Natural killer cell (primary cell): ENCODE measurements at regions of chr11 and their contacts with region 1.

Region 1: DNA sequence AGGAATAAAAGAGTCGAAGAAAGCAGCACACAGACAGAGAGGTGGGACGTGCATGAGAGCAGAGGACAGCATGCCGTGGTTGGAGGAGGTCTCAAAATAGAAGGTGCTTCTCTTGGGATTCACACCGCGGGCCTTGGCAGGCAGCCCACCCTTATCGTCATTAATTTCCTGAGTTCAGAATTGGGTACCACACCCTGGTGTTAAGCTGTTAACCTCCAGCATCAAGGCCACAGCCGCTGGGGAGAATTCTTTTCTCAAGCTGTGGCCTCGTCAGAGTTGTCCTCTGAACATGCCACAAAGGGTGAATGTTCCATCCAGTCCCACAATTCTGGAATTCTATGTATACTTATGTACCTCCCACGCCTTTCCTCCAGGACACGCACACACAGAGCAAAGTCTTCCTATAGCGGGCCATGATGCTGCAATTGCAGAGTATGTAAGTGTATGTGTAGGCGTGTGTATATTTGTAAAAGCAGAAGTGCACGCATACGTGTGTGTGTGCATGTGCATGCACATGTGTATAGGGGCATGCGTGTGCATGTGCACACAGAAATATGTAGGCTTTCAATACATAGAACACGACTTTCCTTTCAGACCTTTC is 39.0 kb downstream of the ADAMTS8 start:
- DNase-seq: peak; percentile 58 to 79
- ATAC-seq: peak; percentile 75 to 84 (median 79)
- H3K4me3 ChIP-seq: peak overlapping the region; percentile 13
- H3K4me3 Mint-ChIP-seq: peak overlapping the region; percentile 82
- H3K27ac ChIP-seq: peak overlapping the region; percentile 78
- H3K27ac Mint-ChIP-seq: peak overlapping the region; percentile 83 to 90
- H3K4me1 ChIP-seq: peaks cover 36% of the 10 kb centered on the region
- H3K4me1 Mint-ChIP-seq: peaks cover 43 to 49% of the 10 kb centered on the region in 2 donors
- H3K27me3 ChIP-seq: no peaks in the 10 kb centered on the region
- H3K27me3 Mint-ChIP-seq: peaks cover 0 to 9% of the 10 kb centered on the region in 2 donors
- CTCF ChIP-seq: no peak

Region 2: DNA sequence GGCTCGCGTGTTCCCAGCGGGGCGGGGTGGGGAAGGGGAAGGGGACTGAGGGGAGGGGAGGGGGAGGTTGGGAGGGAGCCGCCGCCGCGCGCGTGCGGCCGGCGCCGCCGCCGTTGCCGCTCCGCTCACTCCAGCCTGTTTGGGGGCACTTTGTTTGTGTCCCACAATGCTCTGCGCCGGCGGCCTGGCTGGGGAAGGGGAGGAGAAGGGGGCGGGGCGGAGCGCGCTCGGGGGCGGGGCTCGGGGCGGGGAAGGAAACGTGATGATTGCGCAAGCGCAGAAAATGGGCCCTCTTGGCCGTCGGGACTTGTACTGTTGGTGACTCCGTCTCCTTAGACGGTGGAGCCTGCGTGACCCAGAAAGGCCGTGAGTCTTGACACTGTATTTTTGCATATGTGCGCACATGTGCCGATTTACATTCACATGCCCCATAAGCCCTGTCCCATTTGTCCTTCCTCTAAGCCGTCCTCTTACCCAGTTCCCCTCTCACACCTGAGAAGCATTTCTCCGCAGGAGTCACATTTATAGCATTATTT is 74.6 kb before region 1 on chr11 and contains the start of gene ZBTB44:
- intact Hi-C with region 1: loop called (anchors 2 kb)
- DNase-seq: peak; percentile 81 to 95
- ATAC-seq: peak; percentile 85 to 96 (median 87)
- H3K4me3 ChIP-seq: peak within 1 kb of the TSS; percentile 83
- H3K4me3 Mint-ChIP-seq: peak within 1 kb of the TSS; percentile 95
- H3K27ac ChIP-seq: peak within 1 kb of the TSS; percentile 87
- H3K27ac Mint-ChIP-seq: peak within 1 kb of the TSS; percentile 95 to 96
- H3K4me1 ChIP-seq: peaks cover 16% of the 10 kb centered on the region
- H3K4me1 Mint-ChIP-seq: peaks cover 35 to 37% of the 10 kb centered on the region in 2 donors
- H3K27me3 ChIP-seq: no peaks in the 10 kb centered on the region
- H3K27me3 Mint-ChIP-seq: no peaks in the 10 kb centered on the region
- CTCF ChIP-seq: no peak
- total RNA-seq, gene ZBTB44: 103 to 131 (median 105) TPM

Region 3: DNA sequence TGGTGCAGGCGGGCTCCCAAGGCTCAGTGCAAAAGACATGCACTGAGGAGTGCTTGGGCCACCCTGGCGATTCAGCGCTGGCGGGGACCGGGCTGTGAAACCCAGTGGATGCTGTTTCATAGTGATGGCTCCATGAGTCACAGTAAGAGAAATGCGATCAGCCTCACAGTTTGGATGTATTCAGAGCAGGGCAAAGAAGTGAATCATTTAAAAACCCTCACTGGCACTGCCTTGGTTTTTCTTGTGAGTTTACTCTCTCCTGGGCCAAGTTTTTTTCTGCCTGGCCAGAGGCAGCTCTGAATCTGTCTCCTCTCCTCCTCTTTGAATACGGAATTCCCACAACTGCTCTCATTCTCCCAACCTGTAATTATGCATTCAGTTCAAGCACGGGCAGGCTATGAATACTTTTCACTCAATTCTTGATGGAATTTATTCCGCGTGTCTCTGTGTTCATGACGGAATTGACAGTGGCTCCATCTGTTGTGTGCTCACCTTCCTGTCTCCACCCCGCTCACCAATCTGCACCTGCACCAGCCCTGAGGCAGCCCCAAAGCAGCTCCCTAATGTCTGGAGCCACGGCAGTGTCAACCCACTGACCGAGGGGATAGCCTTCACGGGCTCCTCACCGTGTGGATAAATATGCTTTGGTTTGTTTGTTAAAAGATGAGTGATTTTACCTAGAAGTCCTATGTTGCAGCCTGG is 24.1 kb after region 1 on chr11:
- intact Hi-C with region 1: no loop called
- DNase-seq: no peak
- ATAC-seq: no peak
- H3K4me3 ChIP-seq: no peak overlapping the region
- H3K4me3 Mint-ChIP-seq: no peak overlapping the region
- H3K27ac ChIP-seq: no peak overlapping the region
- H3K27ac Mint-ChIP-seq: no peak overlapping the region
- H3K4me1 ChIP-seq: no peaks in the 10 kb centered on the region
- H3K4me1 Mint-ChIP-seq: peaks cover 0 to 4% of the 10 kb centered on the region in 2 donors
- H3K27me3 ChIP-seq: no peaks in the 10 kb centered on the region
- H3K27me3 Mint-ChIP-seq: peaks cover 21 to 24% of the 10 kb centered on the region in 2 donors
- CTCF ChIP-seq: no peak

Region 4: DNA sequence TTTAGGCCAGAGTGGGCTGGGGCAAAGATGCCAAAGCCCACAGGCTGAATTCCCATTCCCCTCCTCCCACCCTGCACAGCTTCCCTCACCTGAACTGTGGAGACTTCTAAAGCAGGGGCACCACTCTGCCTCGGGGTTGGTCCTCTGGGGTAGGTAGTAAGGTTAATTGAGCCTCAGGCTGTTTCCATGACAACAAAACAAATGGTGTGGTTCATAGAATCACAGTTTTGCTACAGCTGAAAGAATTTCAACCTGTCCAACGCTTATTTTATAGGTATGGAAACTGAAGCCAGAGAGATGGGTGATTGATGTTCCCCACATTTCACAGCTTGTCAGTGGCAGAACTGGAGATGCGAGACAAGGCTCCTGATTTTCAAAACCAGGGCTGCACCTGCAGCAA is 417.3 kb after region 1 on chr11:
- intact Hi-C with region 1: no loop called
- DNase-seq: no peak
- ATAC-seq: no peak
- H3K4me3 ChIP-seq: no peak overlapping the region
- H3K4me3 Mint-ChIP-seq: no peak overlapping the region
- H3K27ac ChIP-seq: no peak overlapping the region
- H3K27ac Mint-ChIP-seq: no peak overlapping the region
- H3K4me1 ChIP-seq: no peaks in the 10 kb centered on the region
- H3K4me1 Mint-ChIP-seq: no peaks in the 10 kb centered on the region
- H3K27me3 ChIP-seq: no peaks in the 10 kb centered on the region
- H3K27me3 Mint-ChIP-seq: peaks cover 3 to 9% of the 10 kb centered on the region in 2 donors
- CTCF ChIP-seq: no peak